ENCODE measurements at regions of chr19 and their contacts with region 1.

Region 1: GRCh38 chr19:1551068-1552040 is 16.8 kb downstream of the MEX3D start:
- DNase-seq: no peak
- ATAC-seq: no peak
- H3K4me3 ChIP-seq: no peak overlapping the region
- H3K4me1 ChIP-seq: no peaks in the 10 kb centered on the region
- CTCF ChIP-seq: no peak

Region 2: DNA sequence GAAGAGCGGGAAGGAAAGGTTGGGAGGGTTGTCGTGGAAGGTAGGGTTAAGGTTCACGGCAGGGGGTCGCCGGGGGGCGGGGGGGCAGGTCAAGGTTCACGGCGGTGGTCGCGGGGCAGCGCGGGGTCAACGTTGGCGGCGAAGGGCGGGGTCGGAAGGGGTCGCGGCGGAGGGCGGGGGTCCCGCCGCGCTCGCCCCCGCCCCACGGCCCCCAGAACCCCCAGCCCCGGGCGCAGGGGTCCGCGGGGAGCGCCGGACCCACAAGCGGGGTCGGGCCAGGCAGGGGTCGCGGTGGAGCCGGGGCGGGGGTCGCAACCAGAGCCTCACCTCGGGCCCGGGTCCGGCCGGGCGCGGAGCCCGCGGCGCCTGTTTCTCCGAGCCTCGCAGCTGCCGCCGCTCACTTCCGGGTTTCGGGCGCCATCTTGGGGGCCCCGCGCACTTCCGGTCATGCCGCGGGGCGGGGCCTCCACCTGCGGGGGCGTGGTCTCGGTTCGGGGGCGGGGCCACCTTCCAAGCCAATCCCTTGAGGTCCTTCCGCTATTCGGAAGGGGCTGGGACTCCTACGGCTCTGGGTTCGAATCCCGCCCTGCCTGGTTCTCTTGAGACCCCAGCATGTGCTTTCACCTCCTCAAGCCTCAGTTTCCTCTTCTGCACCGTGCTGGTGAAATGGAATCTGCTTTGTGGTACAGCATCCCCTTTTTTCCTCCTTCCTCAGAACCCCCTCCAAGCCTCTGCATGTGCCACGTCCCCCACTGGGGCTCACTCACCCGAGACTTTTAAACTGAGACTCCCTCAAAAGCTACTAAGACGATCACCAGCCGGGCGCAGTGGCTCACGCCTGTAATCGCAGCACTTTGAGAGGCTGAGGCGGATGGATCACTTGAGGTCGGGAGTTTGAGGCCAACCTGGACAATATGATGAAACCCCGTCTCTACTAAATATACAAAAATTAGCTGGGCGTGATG is 377.2 kb before region 1 on chr19 and contains the start of gene SBNO2:
- intact Hi-C with region 1: no loop called
- DNase-seq: peak; percentile 93 to 96 (median 95)
- ATAC-seq: peak; percentile 90
- H3K4me3 ChIP-seq: peak within 1 kb of the TSS; percentile 75
- H3K4me1 ChIP-seq: peaks cover 13% of the 10 kb centered on the region
- CTCF ChIP-seq: no peak
- total RNA-seq, gene SBNO2: 58.0 to 86.6 (median 74.6) TPM

Region 3: DNA sequence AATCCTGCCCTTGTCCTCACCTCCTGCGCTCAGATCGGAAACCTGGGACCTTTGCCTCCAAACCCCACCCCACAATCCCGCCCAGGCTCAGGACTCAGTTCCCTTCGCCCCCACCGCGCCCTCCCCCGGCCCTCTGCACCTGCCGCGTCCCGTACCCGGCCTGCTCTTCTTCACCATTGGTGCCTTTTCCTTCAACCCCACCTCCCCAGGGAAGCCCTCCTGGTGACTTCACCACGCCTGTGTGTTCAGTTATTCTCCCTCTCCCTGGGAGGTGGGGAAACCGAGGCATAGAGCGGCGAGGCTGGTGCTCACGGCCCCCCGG is 120.3 kb after region 1 on chr19:
- intact Hi-C with region 1: loop called in 1 of 2 experiments (anchors 2 kb)
- DNase-seq: no peak
- ATAC-seq: no peak
- H3K4me3 ChIP-seq: no peak overlapping the region
- H3K4me1 ChIP-seq: peaks cover 9% of the 10 kb centered on the region
- CTCF ChIP-seq: no peak